ENCODE measurements at regions of chr15 and their contacts with region 1.

Region 1: DNA sequence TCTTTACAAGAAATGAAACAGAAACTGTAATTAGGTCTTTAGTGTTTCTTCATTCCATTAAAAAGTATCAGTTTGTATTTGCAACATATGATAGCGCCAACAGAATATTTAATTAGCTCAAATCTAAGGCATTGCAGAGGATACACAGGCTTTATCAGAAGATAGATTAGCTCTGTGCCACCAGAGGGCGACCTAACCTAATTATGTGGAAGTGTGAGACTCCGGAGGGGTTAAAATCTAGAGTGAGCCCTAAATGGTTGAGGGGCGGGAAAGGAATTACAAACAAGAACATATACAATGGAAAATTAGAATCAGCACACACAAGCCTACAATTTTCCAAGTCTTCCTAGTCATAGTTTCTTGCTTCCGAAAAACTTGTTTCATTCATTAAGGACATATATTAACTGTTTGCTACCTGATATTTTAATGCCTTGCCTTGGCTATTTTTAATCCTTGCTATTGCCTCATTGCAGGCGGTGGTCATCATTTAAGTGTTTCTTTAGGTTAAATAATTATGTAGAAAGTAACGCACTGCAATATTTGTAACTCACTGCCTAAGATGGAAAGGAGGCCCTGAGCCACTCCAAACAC is 18.0 kb upstream of the RYR3 start:
- DNase-seq: peak; percentile 79
- H3K4me3 Mint-ChIP-seq: no peak overlapping the region
- H3K27ac Mint-ChIP-seq: no peak overlapping the region
- H3K4me1 Mint-ChIP-seq: peaks cover 20% of the 10 kb centered on the region
- H3K27me3 Mint-ChIP-seq: no peaks in the 10 kb centered on the region
- CTCF ChIP-seq: peak; percentile 88

Region 2: DNA sequence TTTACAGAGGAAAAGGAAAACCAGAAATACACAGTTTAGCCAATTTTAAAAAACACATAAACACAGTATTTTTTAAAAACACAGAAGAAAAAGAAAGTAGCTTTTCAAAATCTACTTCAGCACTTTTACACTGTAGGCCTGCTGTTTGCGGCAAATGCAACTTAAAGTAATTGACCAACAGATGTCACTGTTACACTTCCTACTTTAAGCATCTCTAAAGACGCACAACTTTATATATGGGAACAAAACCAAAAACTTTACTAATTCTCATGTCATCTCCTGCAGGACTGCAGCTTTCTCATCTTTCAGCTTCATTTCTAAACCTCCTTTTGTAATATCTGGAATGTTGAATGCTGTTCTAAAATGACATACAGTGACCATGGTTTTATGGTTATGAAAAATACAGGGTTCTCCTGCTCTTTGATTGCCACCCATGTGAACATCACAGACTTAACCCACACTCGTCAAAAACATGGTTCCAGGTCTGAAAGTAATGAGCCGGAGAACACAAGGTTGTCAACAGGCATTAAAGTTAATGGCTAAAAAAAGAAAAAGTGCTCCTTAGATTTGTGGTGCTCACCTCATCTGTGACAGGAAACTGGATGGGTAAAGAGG is 206.2 kb before region 1 on chr15:
- CTCF ChIA-PET with region 1: interaction called, 12 read pairs
- POLR2A ChIA-PET with region 1: no interaction called
- intact Hi-C with region 1: no loop called
- DNase-seq: peak; percentile 63
- H3K4me3 Mint-ChIP-seq: no peak overlapping the region
- H3K27ac Mint-ChIP-seq: no peak overlapping the region
- H3K4me1 Mint-ChIP-seq: no peaks in the 10 kb centered on the region
- H3K27me3 Mint-ChIP-seq: no peaks in the 10 kb centered on the region
- CTCF ChIP-seq: peak; percentile 42

Region 3: GRCh38 chr15:33262306-33262705 is 30.5 kb before region 1 on chr15:
- CTCF ChIA-PET with region 1: interaction called, 14 read pairs
- POLR2A ChIA-PET with region 1: interaction called, 3 read pairs
- intact Hi-C with region 1: no loop called
- DNase-seq: no peak
- H3K4me3 Mint-ChIP-seq: no peak overlapping the region
- H3K27ac Mint-ChIP-seq: no peak overlapping the region
- H3K4me1 Mint-ChIP-seq: no peaks in the 10 kb centered on the region
- H3K27me3 Mint-ChIP-seq: no peaks in the 10 kb centered on the region
- CTCF ChIP-seq: no peak

Region 4: DNA sequence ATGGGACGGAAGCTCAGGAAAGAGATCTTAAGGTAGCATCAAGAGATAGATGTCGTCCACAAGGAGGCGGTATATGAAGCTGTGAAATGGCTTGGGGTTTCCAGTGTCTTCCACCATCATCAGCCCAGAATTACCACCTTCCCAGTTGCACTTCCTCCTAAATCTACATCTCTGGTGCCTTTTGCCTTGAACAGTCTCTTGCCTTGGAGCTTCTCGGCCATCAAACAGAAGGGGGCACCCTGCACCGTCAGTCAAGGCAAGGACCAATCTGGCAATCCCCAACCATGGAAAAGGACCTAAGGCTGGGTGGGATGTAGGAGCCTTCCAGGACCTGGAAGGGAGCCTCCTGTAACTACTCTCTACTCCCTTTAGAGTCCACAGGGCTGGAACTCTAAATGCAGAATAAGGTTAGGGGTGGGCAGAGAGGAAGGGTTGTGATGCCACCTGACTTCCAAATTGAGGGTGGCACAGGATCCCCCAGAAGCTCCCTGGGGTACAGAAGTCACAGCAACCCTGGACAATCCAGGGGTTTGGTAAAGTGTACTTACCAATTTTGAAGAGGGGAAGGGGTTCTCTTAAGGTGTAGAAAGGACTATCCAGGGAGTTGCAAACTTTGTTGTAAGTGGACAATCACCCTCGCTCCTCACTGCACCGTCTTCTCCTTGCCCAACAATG is 16.9 kb after region 1 on chr15:
- CTCF ChIA-PET with region 1: interaction called, 21 read pairs
- POLR2A ChIA-PET with region 1: interaction called, 3 read pairs
- intact Hi-C with region 1: no loop called
- DNase-seq: no peak
- H3K4me3 Mint-ChIP-seq: no peak overlapping the region
- H3K27ac Mint-ChIP-seq: no peak overlapping the region
- H3K4me1 Mint-ChIP-seq: peaks cover 6% of the 10 kb centered on the region
- H3K27me3 Mint-ChIP-seq: peaks cover 41% of the 10 kb centered on the region
- CTCF ChIP-seq: no peak

Region 5: DNA sequence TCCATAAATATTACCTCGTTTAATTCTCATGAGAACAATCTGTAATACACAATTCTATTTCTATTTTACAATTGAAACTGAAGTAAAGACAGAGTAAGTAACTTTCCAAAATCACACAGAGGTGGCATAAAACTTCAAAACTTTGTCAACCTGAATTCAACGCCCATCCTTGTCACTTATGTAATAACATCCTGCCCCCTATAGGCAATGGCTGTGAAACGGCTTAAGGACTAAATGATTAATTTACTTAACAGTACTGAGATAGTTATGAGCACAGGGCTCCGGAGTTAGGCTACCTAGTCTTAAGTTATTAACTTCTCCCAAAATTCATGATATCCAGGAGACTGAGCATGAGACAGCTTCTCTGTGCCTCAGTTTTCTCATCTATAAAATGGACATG is 382.4 kb after region 1 on chr15:
- CTCF ChIA-PET with region 1: interaction called, 34 read pairs
- POLR2A ChIA-PET with region 1: no interaction called
- intact Hi-C with region 1: loop called (anchors 1 kb)
- DNase-seq: peak; percentile 54
- H3K4me3 Mint-ChIP-seq: no peak overlapping the region
- H3K27ac Mint-ChIP-seq: no peak overlapping the region
- H3K4me1 Mint-ChIP-seq: no peaks in the 10 kb centered on the region
- H3K27me3 Mint-ChIP-seq: peaks cover 77% of the 10 kb centered on the region
- CTCF ChIP-seq: peak; percentile 60

Region 6: GRCh38 chr15:33722005-33722672 is 429.3 kb after region 1 on chr15:
- CTCF ChIA-PET with region 1: interaction called, 10 read pairs
- POLR2A ChIA-PET with region 1: no interaction called
- intact Hi-C with region 1: no loop called
- DNase-seq: no peak
- H3K4me3 Mint-ChIP-seq: no peak overlapping the region
- H3K27ac Mint-ChIP-seq: no peak overlapping the region
- H3K4me1 Mint-ChIP-seq: peaks cover 7% of the 10 kb centered on the region
- H3K27me3 Mint-ChIP-seq: no peaks in the 10 kb centered on the region
- CTCF ChIP-seq: no peak